ENCODE measurements at regions of chr17 and their contacts with region 1.

Region 1: GRCh38 chr17:72839131-72839725 is 253.3 kb downstream of the SLC39A11 start:
- DNase-seq: no peak

Region 2: GRCh38 chr17:72775919-72776318 is 63.3 kb before region 1 on chr17:
- intact Hi-C with region 1: loop called in 1 of 2 experiments (anchors 10 kb)
- DNase-seq: no peak

Region 3: DNA sequence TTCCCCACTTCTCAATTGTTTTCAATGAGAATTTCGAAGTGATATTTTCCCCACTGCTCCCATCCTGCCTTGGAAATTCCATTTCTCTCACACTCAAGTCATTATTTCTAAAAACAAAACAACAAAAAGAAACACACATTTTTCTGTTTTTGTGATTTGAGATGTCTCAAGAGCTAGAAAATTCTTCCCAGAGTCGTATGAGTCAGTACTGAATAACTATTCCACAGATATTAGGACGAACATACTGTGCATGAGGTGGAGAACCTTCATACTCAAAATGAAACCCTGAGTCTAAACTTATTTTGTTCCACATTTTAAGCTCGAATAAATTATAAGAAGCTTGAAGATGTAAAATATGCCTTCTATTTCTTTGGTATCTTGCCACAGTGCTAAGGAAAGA is 48.7 kb after region 1 on chr17:
- intact Hi-C with region 1: loop called in 1 of 2 experiments (anchors 2 kb)
- DNase-seq: no peak

Measured in posterior vena cava (tissue), 2 donors.